Thyroid gland (tissue), 4 donors: ENCODE measurements at regions of chr1 and their contacts with region 1.

Region 1: GRCh38 chr1:182968151-182968765 is 15.3 kb upstream of the SHCBP1L start:
- DNase-seq: no peak
- H3K4me3 ChIP-seq: no peak overlapping the region
- H3K27ac ChIP-seq: no peak overlapping the region
- H3K4me1 ChIP-seq: no peaks in the 10 kb centered on the region
- H3K27me3 ChIP-seq: no peaks in the 10 kb centered on the region
- CTCF ChIP-seq: no peak
- POLR2A ChIP-seq: no peak

Region 2: GRCh38 chr1:183227963-183228649 is 259.8 kb after region 1 on chr1:
- intact Hi-C with region 1: loop called (anchors 5 kb)
- DNase-seq: peak; percentile 48 to 57
- H3K4me3 ChIP-seq: no peak overlapping the region
- H3K27ac ChIP-seq: no peak overlapping the region
- H3K4me1 ChIP-seq: peaks cover 0 to 12% of the 10 kb centered on the region in 2 donors
- H3K27me3 ChIP-seq: no peaks in the 10 kb centered on the region
- CTCF ChIP-seq: peak; percentile 54 to 69 (median 60)
- POLR2A ChIP-seq: no peak